ENCODE measurements at regions of chr6 and their contacts with region 1.

Region 1: DNA sequence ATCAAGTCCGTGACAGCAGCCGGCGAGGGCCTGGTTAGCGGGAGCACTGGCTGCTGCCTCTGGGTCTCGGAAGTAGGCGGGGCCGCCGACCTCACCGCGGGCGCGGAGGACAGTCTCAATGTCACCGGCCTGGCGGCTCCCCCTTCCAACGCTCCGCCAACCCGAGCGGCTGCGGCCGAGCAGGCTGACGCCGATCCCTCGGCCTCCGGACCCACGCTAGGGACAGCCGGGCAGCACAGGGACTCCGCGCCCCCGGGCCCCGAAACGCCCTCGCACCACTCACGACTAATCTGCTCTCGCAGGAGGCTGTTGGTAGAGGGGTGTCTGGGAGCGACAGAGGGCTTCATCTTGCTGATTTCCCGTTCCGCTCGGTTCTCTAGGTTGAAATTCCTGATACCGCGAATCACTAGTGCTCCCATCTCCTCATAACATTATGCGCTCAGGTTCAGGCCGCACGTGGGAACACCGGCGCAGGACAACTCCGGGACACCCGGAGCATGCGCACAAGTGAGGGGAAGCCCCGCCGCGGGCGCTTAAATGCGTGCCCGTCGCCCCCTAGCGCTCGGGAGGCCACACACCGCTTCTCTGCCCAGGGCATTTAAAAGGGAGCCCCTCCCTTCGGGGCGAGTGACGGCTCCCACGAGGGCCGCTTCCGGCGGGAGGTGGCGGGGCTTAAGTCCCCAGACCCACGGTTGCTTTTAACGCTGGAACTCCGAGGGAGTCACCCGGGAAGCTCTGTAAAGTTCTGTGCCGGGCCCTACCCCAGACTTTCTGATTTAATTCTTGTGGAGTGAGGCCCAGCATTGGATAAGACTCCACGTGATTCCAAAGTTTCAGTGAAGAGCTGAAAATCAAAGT is at the start of gene NDUFAF4:
- DNase-seq: peak; percentile 96
- H3K4me3 Mint-ChIP-seq: peak within 1 kb of the TSS; percentile 91
- H3K27ac Mint-ChIP-seq: peak within 1 kb of the TSS; percentile 92
- H3K4me1 Mint-ChIP-seq: peaks cover 28% of the 10 kb centered on the region
- H3K27me3 Mint-ChIP-seq: peaks cover 9% of the 10 kb centered on the region
- total RNA-seq, gene NDUFAF4: 49.5 to 53.3 TPM

Region 2: GRCh38 chr6:95203153-95203754 is 1694.4 kb before region 1 on chr6:
- CTCF ChIA-PET with region 1: no interaction called
- intact Hi-C with region 1: loop called (anchors 10 kb)
- DNase-seq: peak; percentile 51
- H3K4me3 Mint-ChIP-seq: no peak overlapping the region
- H3K27ac Mint-ChIP-seq: no peak overlapping the region
- H3K4me1 Mint-ChIP-seq: no peaks in the 10 kb centered on the region
- H3K27me3 Mint-ChIP-seq: no peaks in the 10 kb centered on the region

Region 3: GRCh38 chr6:95577304-95578105 is 1320.1 kb before region 1 on chr6 and contains the start of gene MANEA:
- CTCF ChIA-PET with region 1: no interaction called
- intact Hi-C with region 1: loop called (anchors 2 kb)
- DNase-seq: peak; percentile 80
- H3K4me3 Mint-ChIP-seq: peak within 1 kb of the TSS; percentile 96
- H3K27ac Mint-ChIP-seq: peak within 1 kb of the TSS; percentile 98
- H3K4me1 Mint-ChIP-seq: peaks cover 36% of the 10 kb centered on the region
- H3K27me3 Mint-ChIP-seq: no peaks in the 10 kb centered on the region
- total RNA-seq, gene MANEA: 14.0 to 16.0 TPM

Region 4: GRCh38 chr6:96626759-96627364 is 270.8 kb before region 1 on chr6:
- CTCF ChIA-PET with region 1: interaction called, 11 read pairs
- intact Hi-C with region 1: loop called (anchors 1 kb)
- DNase-seq: no peak
- H3K4me3 Mint-ChIP-seq: no peak overlapping the region
- H3K27ac Mint-ChIP-seq: no peak overlapping the region
- H3K4me1 Mint-ChIP-seq: no peaks in the 10 kb centered on the region
- H3K27me3 Mint-ChIP-seq: peaks cover 4% of the 10 kb centered on the region

Region 5: GRCh38 chr6:96947055-96947454 is 49.4 kb after region 1 on chr6:
- CTCF ChIA-PET with region 1: interaction called, 3 read pairs
- intact Hi-C with region 1: loop called (anchors 2 kb)
- DNase-seq: no peak
- H3K4me3 Mint-ChIP-seq: no peak overlapping the region
- H3K27ac Mint-ChIP-seq: no peak overlapping the region
- H3K4me1 Mint-ChIP-seq: peaks cover 4% of the 10 kb centered on the region
- H3K27me3 Mint-ChIP-seq: no peaks in the 10 kb centered on the region

Region 6: DNA sequence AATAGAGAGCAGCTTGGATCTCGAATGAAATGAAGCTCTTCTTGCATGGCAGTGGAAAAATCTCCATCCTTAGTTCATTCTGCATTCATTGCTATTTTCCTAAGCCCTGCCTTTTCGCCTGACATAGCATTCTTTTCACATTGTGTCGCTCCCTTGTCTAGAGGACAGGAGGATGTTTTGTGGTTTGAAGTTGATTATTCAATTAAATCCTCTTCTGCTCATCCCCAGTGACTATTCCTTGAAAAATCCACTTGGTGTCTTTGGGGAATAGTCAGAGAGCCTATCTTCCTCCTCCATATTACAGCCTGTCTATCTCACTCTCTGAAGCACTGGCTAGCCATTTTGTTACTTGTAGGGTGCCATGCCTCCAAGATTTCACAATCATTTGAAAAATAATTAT is 188.2 kb after region 1 on chr6:
- CTCF ChIA-PET with region 1: no interaction called
- intact Hi-C with region 1: no loop called
- DNase-seq: no peak
- H3K4me3 Mint-ChIP-seq: no peak overlapping the region
- H3K27ac Mint-ChIP-seq: no peak overlapping the region
- H3K4me1 Mint-ChIP-seq: peaks cover under 1% of the 10 kb centered on the region
- H3K27me3 Mint-ChIP-seq: no peaks in the 10 kb centered on the region

Region 7: GRCh38 chr6:97282726-97283617 is 385.4 kb after region 1 on chr6 and contains the start of gene MMS22L:
- CTCF ChIA-PET with region 1: interaction called, 4 read pairs
- intact Hi-C with region 1: loop called (anchors 1 kb)
- DNase-seq: peak; percentile 97
- H3K4me3 Mint-ChIP-seq: peak within 1 kb of the TSS; percentile 93
- H3K27ac Mint-ChIP-seq: peak within 1 kb of the TSS; percentile 81
- H3K4me1 Mint-ChIP-seq: peaks cover 21% of the 10 kb centered on the region
- H3K27me3 Mint-ChIP-seq: no peaks in the 10 kb centered on the region
- total RNA-seq, gene MMS22L: 34.1 to 37.4 TPM

Measured in activated naive CD4-positive, alpha-beta T cell treated with anti-CD3 and anti-CD28 coated beads for 36 hours (primary cell).